ENCODE measurements at regions of chr3 and their contacts with region 1.

Region 1: GRCh38 chr3:27880969-27881892 is 159.1 kb upstream of the EOMES start:
- DNase-seq: peak; percentile 34 to 87 (median 65)
- ATAC-seq: peak; percentile 88
- H3K4me3 ChIP-seq: peak overlapping the region; percentile 37 to 47
- H3K4me3 Mint-ChIP-seq: peak overlapping the region; percentile 86
- H3K27ac ChIP-seq: peak overlapping the region; percentile 22 to 79
- H3K27ac Mint-ChIP-seq: peak overlapping the region; percentile 93
- H3K4me1 ChIP-seq: peaks cover 65% of the 10 kb centered on the region
- H3K4me1 Mint-ChIP-seq: peaks cover 78% of the 10 kb centered on the region
- H3K27me3 ChIP-seq: no peaks in the 10 kb centered on the region
- H3K27me3 Mint-ChIP-seq: no peaks in the 10 kb centered on the region
- CTCF ChIP-seq: no peak

Region 2: DNA sequence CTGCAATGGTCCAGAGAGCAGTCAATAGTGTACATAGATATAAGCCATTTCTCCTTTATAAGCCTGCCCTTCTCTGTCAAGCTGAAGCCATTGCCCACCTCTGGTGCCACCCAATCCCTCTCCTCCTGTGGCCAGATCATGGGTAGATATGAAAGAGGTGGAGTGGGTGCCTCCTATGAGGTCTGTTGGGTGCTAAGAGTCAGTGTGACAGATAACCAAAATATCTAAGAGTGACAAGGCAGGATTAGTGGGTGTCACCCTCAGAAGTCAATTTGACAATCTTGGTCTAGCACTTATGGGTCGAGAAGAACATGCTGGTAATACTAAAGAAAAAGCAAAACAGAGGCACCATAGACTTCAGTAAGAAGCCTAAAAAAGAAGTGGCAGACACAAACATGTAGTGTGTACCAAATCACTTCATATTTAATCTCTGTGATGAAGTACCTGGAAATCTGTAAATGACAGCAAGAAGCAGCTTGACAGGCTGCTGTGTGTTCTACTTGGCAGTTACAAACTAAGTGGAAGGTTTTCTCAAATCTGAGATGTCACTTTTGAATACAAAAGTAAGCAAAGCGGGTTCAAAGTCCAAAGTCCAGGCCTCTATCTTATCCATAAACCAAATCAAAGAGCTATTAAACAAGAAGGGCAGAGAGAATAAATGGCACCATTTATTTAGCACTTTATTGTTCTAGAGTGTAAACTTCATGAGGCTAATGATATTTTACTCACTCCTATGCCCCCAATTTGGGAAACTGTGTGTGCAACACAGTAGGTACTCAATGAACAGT is 40.2 kb before region 1 on chr3:
- CTCF ChIA-PET with region 1: no interaction called
- POLR2A ChIA-PET with region 1: no interaction called
- intact Hi-C with region 1: loop called in 1 of 2 experiments (anchors 5 kb)
- DNase-seq: peak in 2 of 9 experiments; percentile 32 to 44
- ATAC-seq: no peak
- H3K4me3 ChIP-seq: no peak overlapping the region
- H3K4me3 Mint-ChIP-seq: no peak overlapping the region
- H3K27ac ChIP-seq: no peak overlapping the region
- H3K27ac Mint-ChIP-seq: no peak overlapping the region
- H3K4me1 ChIP-seq: peaks cover 10% of the 10 kb centered on the region
- H3K4me1 Mint-ChIP-seq: peaks cover 40% of the 10 kb centered on the region
- H3K27me3 ChIP-seq: no peaks in the 10 kb centered on the region
- H3K27me3 Mint-ChIP-seq: no peaks in the 10 kb centered on the region
- CTCF ChIP-seq: no peak

Region 3: DNA sequence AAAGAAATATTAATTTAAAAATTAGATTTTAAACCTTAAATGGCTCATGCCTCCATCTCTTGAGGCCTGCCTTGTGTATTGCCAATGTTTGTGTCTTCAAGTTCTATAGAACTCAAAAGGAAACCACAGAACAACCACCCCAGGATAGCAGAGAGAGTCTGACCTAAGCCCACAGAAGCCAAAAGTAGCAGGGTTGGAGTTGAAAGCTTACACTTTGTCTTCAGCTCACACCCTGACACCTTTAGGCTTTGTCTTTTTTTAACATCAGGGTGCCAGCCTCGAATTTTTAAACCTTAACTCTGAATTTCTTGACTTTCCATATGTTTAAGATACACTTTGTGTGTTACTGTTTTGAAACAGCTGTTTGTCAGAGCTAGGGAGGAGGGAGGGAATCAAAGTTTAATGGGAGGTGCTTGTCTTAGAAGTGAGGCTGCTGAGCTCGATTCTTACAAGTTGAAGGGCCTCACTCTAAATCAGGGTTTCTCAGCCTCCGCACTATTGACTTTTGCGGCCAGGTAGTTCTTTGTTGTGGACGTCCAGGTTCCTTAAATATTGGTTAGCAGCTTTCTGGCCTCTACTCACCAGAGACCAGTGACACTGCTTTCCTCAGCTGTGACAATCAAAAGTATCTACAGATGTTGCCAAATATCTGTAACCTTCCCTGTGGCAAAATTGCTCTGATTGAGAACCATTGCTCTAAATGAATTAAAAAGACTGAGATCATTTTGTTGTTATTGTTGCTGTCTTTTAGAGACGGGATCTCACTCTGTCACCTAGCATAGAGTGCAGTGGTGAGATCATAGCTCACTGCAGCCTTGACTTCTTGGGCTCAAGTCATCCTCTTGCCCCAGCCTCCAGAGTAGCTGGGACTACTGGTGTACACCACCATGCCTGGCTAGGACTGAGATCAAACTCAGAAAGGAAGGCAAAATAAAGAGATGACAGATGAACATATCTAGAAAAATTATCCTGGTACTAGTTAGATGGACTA is 19.9 kb before region 1 on chr3:
- CTCF ChIA-PET with region 1: interaction called, 7 read pairs
- POLR2A ChIA-PET with region 1: interaction called, 13 read pairs
- intact Hi-C with region 1: loop called in 1 of 2 experiments (anchors 2 kb)
- DNase-seq: peak in 3 of 9 experiments; percentile 22 to 75 (median 64)
- ATAC-seq: peak; percentile 80
- H3K4me3 ChIP-seq: no peak overlapping the region
- H3K4me3 Mint-ChIP-seq: peak overlapping the region; percentile 46
- H3K27ac ChIP-seq: peak overlapping the region in 1 of 2 experiments; percentile 63
- H3K27ac Mint-ChIP-seq: peak overlapping the region; percentile 92
- H3K4me1 ChIP-seq: peaks cover 38% of the 10 kb centered on the region
- H3K4me1 Mint-ChIP-seq: peaks cover 47% of the 10 kb centered on the region
- H3K27me3 ChIP-seq: no peaks in the 10 kb centered on the region
- H3K27me3 Mint-ChIP-seq: no peaks in the 10 kb centered on the region
- CTCF ChIP-seq: no peak